GM18951 (cell line): ENCODE measurements at regions of chr1 and their contacts with region 1.

Region 1: DNA sequence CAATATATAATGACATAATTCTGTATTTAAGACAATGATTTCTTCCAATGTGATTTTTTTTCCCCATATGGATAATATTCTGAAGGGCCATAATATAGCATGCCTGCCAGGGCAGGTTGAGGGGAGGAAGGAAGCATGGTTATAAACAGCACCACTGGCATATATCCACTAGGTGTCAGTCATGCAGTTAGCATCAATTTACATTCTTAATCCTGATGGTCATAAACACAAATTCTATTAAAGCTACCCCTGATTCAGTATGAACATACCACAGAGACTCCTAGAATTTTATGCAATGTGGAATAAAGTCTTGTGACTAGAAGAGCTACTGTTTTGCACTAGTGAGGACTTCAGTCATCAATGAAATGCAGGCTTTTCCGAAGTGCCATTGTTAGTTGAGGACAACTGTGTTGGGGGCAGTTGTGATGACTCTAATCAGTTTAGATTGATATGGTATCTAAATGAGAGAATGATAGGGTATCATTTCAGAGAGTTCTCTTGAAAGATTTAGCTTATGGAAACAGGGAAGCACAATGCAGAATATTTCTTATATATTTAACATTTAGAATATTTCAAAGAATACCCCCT is 342.7 kb upstream of the NR5A2 start:
- POLR2A ChIP-seq: no peak

Region 2: DNA sequence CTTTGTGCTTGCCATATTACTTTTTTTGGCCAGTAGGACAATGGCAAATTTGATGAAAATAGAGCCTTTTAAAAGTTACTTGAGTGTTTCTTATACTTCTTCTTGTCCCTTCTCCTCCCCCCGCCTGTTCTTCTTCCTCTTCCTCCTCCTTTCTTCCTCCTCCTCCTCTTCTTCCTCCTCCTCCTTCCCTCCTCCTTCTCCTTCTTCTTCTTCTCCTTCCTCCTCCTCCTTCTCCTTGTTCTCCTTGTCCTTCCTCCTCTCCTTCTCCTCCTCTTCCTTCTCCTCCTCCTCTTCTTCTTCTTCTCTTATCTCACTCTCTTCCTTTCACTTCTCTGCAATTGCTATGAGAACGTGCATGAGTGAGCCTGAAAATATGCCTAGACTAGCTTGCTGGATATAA is 123.4 kb before region 1 on chr1:
- in situ Hi-C with region 1: no loop called
- POLR2A ChIP-seq: no peak

Region 3: GRCh38 chr1:199742547-199742946 is 57.8 kb after region 1 on chr1:
- in situ Hi-C with region 1: no loop called
- POLR2A ChIP-seq: no peak

Region 4: GRCh38 chr1:200510228-200510623 is 825.4 kb after region 1 on chr1:
- in situ Hi-C with region 1: loop called (anchors 10 kb)
- POLR2A ChIP-seq: no peak